Mucosa of descending colon (tissue), 3 donors: ENCODE measurements at regions of chr12 and their contacts with region 1.

Region 1: GRCh38 chr12:53418221-53418620 is 5.4 kb upstream of the AMHR2 start:
- DNase-seq: no peak
- ATAC-seq: no peak
- H3K4me3 ChIP-seq: no peak overlapping the region
- H3K4me1 ChIP-seq: no peaks in the 10 kb centered on the region
- CTCF ChIP-seq: no peak

Region 2: DNA sequence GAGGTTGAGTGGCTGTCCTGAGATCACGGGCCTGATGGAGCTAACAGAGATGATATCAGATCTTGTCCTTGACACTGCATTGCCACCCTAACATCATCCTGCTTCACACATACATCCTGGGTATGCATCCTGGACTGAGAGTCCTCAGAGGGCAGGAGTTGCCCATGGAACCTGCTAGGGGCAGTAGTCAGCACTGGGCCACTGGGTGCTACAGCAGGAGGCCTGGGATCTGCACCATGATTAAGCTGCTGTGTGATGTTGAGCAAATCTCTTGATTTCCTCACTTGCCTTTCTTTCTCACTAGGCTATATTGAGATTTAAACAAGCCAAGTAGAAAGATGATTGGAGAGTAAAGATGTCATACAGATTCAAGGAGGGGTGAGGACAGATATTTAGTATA is 434.1 kb before region 1 on chr12:
- intact Hi-C with region 1: no loop called
- DNase-seq: no peak
- ATAC-seq: no peak
- H3K4me3 ChIP-seq: no peak overlapping the region
- H3K4me1 ChIP-seq: peaks cover 2% of the 10 kb centered on the region
- CTCF ChIP-seq: no peak

Region 3: GRCh38 chr12:53352331-53353256 is 65.6 kb before region 1 on chr12:
- intact Hi-C with region 1: loop called (anchors 2 kb)
- DNase-seq: peak in 2 of 3 donors; percentile 78 to 93
- ATAC-seq: peak; percentile 99
- H3K4me3 ChIP-seq: no peak overlapping the region
- H3K4me1 ChIP-seq: peaks cover 11% of the 10 kb centered on the region
- CTCF ChIP-seq: peak; percentile 65

Region 4: GRCh38 chr12:53623548-53624385 is 205.5 kb after region 1 on chr12:
- intact Hi-C with region 1: no loop called
- DNase-seq: peak in 1 of 3 donors; percentile 31
- ATAC-seq: no peak
- H3K4me3 ChIP-seq: no peak overlapping the region
- H3K4me1 ChIP-seq: peaks cover 25% of the 10 kb centered on the region
- CTCF ChIP-seq: no peak

Region 5: DNA sequence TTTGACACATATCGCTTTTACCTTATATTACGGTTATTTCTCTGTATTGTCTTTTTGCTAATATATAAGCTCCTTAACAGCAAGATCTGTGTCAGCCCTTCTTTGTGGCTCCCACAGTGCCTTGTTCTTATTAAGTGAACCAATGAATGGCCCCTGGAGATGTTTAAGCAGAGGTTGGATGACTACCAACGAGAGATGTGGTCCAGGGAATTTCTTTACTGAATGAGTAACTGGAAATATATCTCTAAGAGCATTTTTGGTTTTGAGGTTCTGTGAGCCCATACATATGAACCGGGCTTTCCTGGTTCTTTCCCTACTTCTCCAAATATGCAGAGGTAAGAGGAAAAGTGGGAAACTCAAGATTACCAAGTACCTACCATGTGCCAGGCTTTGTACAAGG is 285.5 kb after region 1 on chr12:
- intact Hi-C with region 1: no loop called
- DNase-seq: no peak
- ATAC-seq: no peak
- H3K4me3 ChIP-seq: no peak overlapping the region
- H3K4me1 ChIP-seq: no peaks in the 10 kb centered on the region
- CTCF ChIP-seq: no peak

Region 6: DNA sequence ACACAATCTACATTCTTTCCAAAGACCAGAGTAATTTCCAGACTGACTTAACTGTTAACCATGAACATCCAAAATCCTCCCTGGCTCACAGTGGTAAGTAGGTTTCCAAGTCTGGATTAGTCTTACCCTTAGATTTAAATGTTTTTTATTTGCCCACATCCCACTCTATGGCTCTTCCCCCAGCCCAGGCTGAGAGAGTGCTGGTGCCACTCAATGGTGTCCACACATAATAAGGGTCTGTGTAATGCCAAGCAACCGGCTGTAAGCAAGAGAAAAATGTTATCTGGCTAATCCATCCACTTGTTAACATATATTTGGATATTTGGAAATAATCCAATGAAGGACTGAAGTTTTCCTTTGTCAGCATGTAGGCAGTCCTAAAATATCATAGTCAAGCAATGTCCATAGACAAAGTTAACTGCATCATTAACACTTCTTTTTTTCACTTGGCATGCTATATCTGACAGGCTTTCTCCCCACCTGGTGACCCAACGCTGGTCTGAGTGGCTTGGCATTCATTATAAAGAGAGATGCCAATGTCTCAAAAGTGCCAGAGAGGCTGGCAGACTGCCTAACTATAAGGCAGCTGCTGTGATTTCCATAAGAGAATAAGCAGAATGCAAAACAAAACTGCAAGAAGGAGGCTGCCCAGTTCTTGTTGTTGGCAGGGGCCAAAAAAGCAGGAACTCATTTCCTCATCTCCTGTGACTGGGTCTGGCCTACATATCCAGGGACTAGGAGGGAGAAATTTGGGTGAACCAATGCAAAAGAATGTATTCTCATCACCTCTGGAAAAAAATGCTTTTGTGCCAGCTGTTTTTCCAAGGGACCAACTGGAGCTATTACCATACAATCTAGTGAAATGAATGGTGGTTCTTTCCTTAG is 506.5 kb after region 1 on chr12:
- intact Hi-C with region 1: no loop called
- DNase-seq: no peak
- ATAC-seq: no peak
- H3K4me3 ChIP-seq: no peak overlapping the region
- H3K4me1 ChIP-seq: no peaks in the 10 kb centered on the region
- CTCF ChIP-seq: no peak